Sigmoid colon (tissue), 7 donors: ENCODE measurements at regions of chr3 and their contacts with region 1.

Region 1: GRCh38 chr3:29280404-29281093 is at the start of gene RBMS3:
- DNase-seq: peak; percentile 97
- H3K4me3 ChIP-seq: peak within 1 kb of the TSS; percentile 37 to 63 (median 58)
- H3K27ac ChIP-seq: peak within 1 kb of the TSS; percentile 85 to 88 (median 87)
- H3K4me1 ChIP-seq: peaks cover 0 to 42% (median 25%) of the 10 kb centered on the region in 4 donors
- H3K27me3 ChIP-seq: no peaks in the 10 kb centered on the region
- CTCF ChIP-seq: peak in 3 of 4 experiments; percentile 37 to 64 (median 52)
- EP300 ChIP-seq: peak in 1 of 4 donors; percentile 14
- POLR2A ChIP-seq: peak in 1 of 2 donors; percentile 60
- total RNA-seq, gene RBMS3: 39.9 to 61.9 (median 59.8) TPM

Region 2: GRCh38 chr3:28916713-28917499 is 363.6 kb before region 1 on chr3:
- intact Hi-C with region 1: loop called (anchors 5 kb)
- DNase-seq: peak; percentile 83
- H3K4me3 ChIP-seq: peak overlapping the region; percentile 3 to 44 (median 39)
- H3K27ac ChIP-seq: peak overlapping the region; percentile 40 to 67 (median 62)
- H3K4me1 ChIP-seq: peaks cover 0 to 16% (median 8%) of the 10 kb centered on the region in 4 donors
- H3K27me3 ChIP-seq: no peaks in the 10 kb centered on the region
- CTCF ChIP-seq: peak; percentile 23 to 49 (median 40)
- EP300 ChIP-seq: no peak
- POLR2A ChIP-seq: no peak

Region 3: GRCh38 chr3:29267226-29267625 is 13.3 kb before region 1 on chr3:
- intact Hi-C with region 1: no loop called
- DNase-seq: no peak
- H3K4me3 ChIP-seq: no peak overlapping the region
- H3K27ac ChIP-seq: no peak overlapping the region
- H3K4me1 ChIP-seq: no peaks in the 10 kb centered on the region
- H3K27me3 ChIP-seq: no peaks in the 10 kb centered on the region
- CTCF ChIP-seq: no peak
- EP300 ChIP-seq: no peak
- POLR2A ChIP-seq: no peak

Region 4: GRCh38 chr3:29332195-29332637 is 51.7 kb after region 1 on chr3:
- intact Hi-C with region 1: loop called (anchors 5 kb)
- DNase-seq: no peak
- H3K4me3 ChIP-seq: no peak overlapping the region
- H3K27ac ChIP-seq: peak overlapping the region; percentile 51 to 88 (median 79)
- H3K4me1 ChIP-seq: peaks cover 0 to 69% (median 51%) of the 10 kb centered on the region in 4 donors
- H3K27me3 ChIP-seq: no peaks in the 10 kb centered on the region
- CTCF ChIP-seq: no peak
- EP300 ChIP-seq: no peak
- POLR2A ChIP-seq: no peak

Region 5: DNA sequence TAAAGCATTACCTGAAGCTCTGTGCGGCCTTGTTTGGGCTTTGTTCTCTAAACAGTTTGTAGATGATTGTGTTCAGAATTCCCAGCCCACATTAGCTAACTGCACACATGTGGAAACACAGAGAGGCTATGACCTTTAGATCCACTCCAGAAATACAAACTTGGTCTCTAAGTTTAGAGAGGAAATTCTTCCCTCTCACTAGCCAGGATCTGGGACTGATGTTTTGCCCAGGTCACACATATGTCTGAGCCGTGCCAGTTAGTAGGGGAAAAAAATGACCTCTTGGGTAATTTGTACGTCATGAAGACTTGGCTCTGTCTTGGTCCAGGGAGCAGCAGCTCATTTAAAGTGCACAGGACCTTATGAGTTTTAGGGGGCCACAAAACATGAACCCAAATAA is 223.4 kb after region 1 on chr3:
- intact Hi-C with region 1: loop called (anchors 10 kb)
- DNase-seq: peak; percentile 80
- H3K4me3 ChIP-seq: no peak overlapping the region
- H3K27ac ChIP-seq: peak overlapping the region; percentile 63 to 76 (median 72)
- H3K4me1 ChIP-seq: peaks cover 0 to 21% (median 18%) of the 10 kb centered on the region in 4 donors
- H3K27me3 ChIP-seq: no peaks in the 10 kb centered on the region
- CTCF ChIP-seq: no peak
- EP300 ChIP-seq: peak in 1 of 4 donors; percentile 37
- POLR2A ChIP-seq: no peak

Region 6: DNA sequence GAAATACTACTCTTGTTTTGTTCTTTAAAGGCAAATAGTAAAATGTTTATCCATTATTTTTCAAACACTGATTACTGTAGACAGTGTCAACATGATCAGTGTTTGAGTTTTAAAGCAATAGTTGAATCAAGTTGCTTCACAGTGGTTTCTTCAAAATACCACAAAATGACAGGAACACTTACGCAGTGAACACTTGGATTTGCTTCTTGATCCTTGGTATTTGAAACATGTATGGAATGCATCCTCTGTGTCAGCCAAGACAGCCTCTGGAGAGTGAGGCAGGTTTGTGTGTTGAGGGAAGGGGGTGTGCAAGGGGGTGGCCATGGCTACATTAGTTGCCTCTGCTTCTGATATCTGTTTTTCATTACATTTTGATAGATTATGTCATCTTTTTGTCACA is 413.3 kb after region 1 on chr3:
- intact Hi-C with region 1: loop called (anchors 2 kb)
- DNase-seq: no peak
- H3K4me3 ChIP-seq: no peak overlapping the region
- H3K27ac ChIP-seq: peak overlapping the region; percentile 71 to 86 (median 84)
- H3K4me1 ChIP-seq: peaks cover 0 to 77% (median 50%) of the 10 kb centered on the region in 4 donors
- H3K27me3 ChIP-seq: no peaks in the 10 kb centered on the region
- CTCF ChIP-seq: no peak
- EP300 ChIP-seq: no peak
- POLR2A ChIP-seq: no peak